Calu3 (cell line): ENCODE measurements at regions of chr7 and their contacts with region 1.

Region 1: DNA sequence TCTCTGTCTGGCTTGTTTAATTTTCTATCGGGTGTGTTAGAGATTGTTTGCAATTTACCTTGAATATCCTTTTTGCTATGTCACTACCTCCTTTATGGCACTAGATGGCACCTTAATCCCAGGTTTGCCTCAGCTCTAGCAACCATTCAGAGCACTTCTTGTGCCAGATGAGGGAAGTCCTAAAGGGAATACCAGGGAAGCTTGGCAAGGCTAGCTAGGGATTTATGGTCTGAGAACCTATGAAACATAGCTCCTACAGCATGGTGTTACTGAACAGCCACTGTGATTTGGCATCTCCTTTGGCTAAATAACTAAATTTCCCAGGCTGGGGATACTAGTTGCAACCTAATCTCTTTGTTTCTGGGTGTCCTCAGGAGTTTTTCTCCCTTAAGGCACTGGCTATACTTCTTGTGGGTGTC is 69.0 kb upstream of the VOPP1 start:
- DNase-seq: peak; percentile 56
- H3K4me3 Mint-ChIP-seq: no peak overlapping the region
- H3K27ac Mint-ChIP-seq: no peak overlapping the region
- H3K4me1 Mint-ChIP-seq: no peaks in the 10 kb centered on the region
- H3K27me3 Mint-ChIP-seq: no peaks in the 10 kb centered on the region
- CTCF ChIP-seq: peak; percentile 82

Region 2: DNA sequence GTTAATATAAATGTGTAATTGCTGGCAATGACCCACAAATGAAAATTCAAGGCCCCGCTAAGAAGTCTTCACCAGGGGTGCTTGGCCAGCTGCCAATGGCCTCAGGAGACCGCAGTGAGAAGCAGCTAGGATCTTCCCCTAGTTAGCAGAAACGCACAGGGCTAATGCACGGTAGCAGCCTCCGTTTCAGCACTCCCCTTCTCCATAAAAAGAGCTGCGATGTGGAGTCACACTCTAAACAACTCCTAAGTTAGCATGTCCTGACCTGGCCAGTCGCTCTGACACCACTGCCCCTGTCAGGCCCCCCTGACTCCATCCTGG is 82.3 kb after region 1 on chr7:
- CTCF ChIA-PET with region 1: interaction called, 9 read pairs
- intact Hi-C with region 1: loop called (anchors 2 kb)
- DNase-seq: no peak
- H3K4me3 Mint-ChIP-seq: no peak overlapping the region
- H3K27ac Mint-ChIP-seq: no peak overlapping the region
- H3K4me1 Mint-ChIP-seq: no peaks in the 10 kb centered on the region
- H3K27me3 Mint-ChIP-seq: no peaks in the 10 kb centered on the region
- CTCF ChIP-seq: no peak

Region 3: DNA sequence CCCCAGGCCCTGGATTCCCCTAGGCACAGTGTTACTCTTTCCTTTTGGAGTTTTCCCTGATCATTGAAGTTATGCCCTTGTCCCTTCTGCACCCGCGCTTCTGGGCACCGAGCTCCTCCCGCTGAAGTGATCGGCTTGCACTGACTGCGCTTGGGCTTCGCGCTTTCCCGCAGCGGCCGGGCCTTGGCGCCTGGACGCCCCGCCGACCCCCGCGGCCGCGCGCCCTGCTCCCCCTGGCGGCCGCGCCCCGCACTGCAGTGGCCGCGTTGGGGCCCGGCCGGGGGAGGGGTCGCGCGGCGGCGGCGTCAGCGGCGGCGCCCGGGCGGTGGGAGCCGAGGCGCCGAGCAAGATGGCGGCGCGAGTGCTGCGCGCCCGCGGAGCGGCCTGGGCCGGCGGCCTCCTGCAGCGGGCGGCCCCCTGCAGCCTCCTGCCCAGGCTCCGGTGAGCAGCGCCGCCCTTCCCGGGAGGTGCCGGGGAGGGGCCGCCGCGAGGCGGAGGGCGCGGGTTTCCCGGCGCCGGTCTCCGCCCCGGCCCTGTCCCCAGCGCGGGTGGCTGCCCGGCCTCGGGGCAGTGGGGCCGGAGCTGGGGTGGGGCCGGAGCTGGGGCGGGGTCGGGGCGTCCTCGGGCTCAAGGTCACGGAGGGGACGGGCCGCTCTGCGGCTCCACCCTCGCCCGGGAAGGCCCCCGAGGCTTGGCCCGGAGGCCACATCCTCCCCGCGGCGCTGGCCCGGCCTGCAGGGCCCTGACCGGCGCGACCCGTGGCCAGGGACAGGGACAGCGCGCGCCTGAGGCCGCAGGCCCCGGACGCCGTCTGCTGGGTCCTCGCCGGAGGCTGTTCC is 323.2 kb after region 1 on chr7 and contains the start of gene NIPSNAP2:
- CTCF ChIA-PET with region 1: interaction called, 6 read pairs
- intact Hi-C with region 1: loop called (anchors 1 kb)
- DNase-seq: peak; percentile 87
- H3K4me3 Mint-ChIP-seq: peak within 1 kb of the TSS; percentile 76
- H3K27ac Mint-ChIP-seq: peak within 1 kb of the TSS; percentile 5
- H3K4me1 Mint-ChIP-seq: no peaks in the 10 kb centered on the region
- H3K27me3 Mint-ChIP-seq: no peaks in the 10 kb centered on the region
- CTCF ChIP-seq: peak; percentile 70
- total RNA-seq, gene NIPSNAP2: 81.6 and 93.8 TPM in 2 replicates